ENCODE measurements at regions of chr10 and their contacts with region 1.

Region 1: DNA sequence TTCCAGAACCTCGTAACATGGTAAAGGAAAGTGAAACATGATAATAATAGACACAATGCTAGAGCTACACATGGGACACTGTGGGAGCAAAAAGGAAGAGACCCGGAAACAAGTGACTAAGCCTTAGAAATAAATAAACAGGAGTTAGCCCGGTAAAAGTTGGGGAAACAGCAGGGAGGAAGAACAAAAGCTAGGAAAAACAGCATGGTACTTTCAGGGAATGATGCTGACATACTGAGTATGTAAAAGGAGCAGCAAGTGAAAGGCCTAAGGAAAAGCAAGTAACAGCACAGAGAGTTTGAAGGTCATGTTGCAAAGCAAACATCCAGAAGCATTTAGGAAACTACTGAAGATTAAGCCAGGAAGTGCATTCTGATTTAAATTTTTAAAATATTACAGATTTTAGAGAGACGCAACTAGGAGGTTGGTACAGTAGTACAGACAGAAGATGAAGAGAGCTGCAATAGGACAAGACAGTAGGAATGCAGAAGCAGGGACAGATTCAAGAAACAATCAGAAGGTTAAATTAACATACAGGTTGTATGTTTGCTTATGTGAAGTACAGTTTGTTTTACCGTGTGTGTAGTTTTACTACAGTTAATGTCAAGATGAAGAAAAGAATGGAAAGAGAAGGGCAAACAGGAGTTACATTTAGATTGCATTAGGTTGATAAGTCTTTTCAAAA is 63.7 kb downstream of the ARHGAP12 start:
- DNase-seq: peak; percentile 3

Region 2: DNA sequence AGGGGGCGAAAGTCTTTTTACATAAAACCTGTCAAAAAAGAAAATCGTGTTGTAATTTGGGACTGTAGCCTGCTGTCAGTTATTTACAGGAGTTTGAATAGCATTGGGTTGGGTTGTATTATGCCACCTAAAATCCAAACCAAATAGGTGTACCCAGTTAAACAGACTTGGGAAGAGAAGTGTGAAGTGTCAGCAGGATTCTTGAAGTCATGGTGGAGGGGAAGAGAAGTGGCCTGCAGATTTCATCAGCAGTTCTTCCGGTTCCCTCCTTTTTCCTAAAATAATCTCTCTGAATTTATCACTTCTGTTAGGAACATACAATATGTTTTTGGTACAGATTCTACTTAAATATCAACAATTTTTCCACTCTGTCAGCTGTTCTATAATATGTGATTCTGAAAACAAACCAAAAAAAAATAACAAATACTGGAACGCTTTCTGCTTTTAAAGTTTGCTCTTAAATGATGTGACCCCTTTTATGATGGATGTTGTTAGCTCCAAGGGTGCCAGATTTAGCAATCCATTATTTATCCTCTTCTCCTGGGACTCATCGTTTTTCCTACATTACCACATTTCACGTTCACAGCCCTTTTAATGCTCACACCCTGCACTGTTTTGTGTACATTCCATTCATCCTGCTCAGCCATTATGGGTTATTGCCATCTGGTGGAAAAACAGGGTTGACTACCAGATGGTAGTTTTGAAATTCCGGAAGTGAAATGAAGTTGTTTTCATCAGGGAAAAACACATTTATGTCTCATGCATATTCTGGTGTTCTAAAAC is 82.4 kb after region 1 on chr10:
- CTCF ChIA-PET with region 1: interaction called, 13 read pairs
- POLR2A ChIA-PET with region 1: no interaction called
- DNase-seq: no peak

Region 3: DNA sequence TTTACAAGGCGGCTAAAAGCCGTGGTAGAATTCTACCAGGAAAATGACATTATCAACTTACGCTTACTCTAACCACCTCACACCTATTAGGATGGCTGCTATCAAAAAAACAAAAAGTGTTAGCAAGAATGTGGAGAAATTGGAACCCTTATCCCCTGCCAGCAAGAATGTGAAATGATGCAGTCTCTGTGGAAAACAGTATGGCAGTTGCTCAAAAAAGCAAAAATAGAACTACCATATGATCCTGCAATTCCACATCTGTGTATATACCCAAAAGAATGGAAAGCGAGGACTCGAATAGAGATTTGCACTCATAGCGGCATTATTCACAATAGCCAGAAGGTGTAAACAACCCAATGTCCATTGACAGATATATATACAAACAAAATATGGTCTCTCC is 129.9 kb after region 1 on chr10:
- CTCF ChIA-PET with region 1: interaction called, 10 read pairs
- POLR2A ChIA-PET with region 1: no interaction called
- DNase-seq: no peak

Measured in HEK293T (cell line).